HepG2 (cell line): ENCODE measurements at regions of chr15 and their contacts with region 1.

Region 1: GRCh38 chr15:52208306-52208946 is 17.2 kb upstream of the GNB5 start:
- DNase-seq: peak; percentile 76
- ATAC-seq: peak; percentile 99
- H3K4me3 ChIP-seq: no peak overlapping the region
- H3K27ac ChIP-seq: no peak overlapping the region
- H3K4me1 ChIP-seq: no peaks in the 10 kb centered on the region
- H3K27me3 ChIP-seq: no peaks in the 10 kb centered on the region
- CTCF ChIP-seq: peak; percentile 87
- EP300 ChIP-seq: no peak
- POLR2A ChIP-seq: no peak
- RAD21 ChIP-seq: peak; percentile 68

Region 2: GRCh38 chr15:52163321-52164190 is 44.9 kb before region 1 on chr15:
- CTCF ChIA-PET with region 1: interaction called, 4 read pairs
- POLR2A ChIA-PET with region 1: no interaction called
- in situ Hi-C with region 1: no loop called
- intact Hi-C with region 1: loop called (anchors 1 kb)
- DNase-seq: no peak
- ATAC-seq: peak; percentile 83
- H3K4me3 ChIP-seq: no peak overlapping the region
- H3K27ac ChIP-seq: no peak overlapping the region
- H3K4me1 ChIP-seq: no peaks in the 10 kb centered on the region
- H3K27me3 ChIP-seq: no peaks in the 10 kb centered on the region
- CTCF ChIP-seq: peak; percentile 49
- EP300 ChIP-seq: no peak
- POLR2A ChIP-seq: no peak
- RAD21 ChIP-seq: no peak

Region 3: DNA sequence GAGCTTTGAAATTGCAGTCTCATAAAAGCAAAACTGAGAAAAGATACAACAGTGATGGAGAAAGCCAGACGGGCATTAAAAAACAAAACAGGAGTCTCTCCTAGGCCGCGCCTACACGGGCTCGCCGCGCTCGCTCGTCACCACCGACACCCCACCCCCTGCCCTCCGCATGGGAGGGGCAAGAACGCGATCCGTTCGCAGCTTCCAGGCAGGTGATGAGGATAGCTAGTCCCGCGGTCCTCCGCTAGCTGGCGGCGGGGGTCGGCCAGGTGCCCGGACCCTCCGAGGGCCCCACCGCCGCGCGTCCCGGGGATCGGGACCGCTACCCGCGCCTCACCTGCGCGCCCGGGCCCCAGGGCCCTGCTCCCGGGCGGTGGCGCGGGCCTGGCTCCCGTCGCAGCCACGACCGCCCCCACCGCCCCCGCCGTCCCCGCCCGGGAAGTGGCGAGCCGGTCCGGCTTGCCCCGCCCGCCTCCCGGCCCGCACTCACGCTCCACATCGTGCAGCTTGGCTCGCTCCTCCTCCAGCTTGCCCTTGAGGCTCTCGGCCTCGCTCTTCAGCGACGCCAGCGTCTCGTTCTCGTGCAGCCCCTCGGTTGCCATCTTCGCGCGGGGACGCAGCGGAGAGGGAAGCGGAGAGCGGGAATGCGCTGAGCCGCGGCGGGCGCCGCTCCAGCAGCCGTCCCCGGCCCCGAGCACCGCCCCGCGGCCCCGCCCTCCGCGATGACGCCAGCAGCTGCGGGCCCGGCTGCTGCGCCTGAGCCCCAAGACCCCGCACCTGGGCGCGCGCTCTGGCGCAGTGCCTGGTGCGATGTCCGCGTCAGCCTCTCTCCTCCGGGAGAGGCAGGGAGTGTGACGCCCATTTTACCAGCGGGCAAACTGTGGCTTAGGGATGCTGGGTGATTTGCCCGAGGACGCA is 28.9 kb before region 1 on chr15:
- CTCF ChIA-PET with region 1: interaction called, 10 read pairs
- POLR2A ChIA-PET with region 1: no interaction called
- in situ Hi-C with region 1: no loop called
- intact Hi-C with region 1: loop called (anchors 1 kb)
- DNase-seq: peak; percentile 57
- ATAC-seq: peak; percentile 85
- H3K4me3 ChIP-seq: peak overlapping the region; percentile 66 to 80 (median 76)
- H3K27ac ChIP-seq: no peak overlapping the region
- H3K4me1 ChIP-seq: peaks cover 54% of the 10 kb centered on the region
- H3K27me3 ChIP-seq: 0 out of 5 replicates have a peak, but pooled peaks cover 0 to 4% of the 10 kb centered on the region in 2 experiments
- CTCF ChIP-seq: no peak
- EP300 ChIP-seq: no peak
- POLR2A ChIP-seq: peak; percentile 38 to 65; a peak in 3 of 4 replicates
- RAD21 ChIP-seq: no peak

Region 4: GRCh38 chr15:52193791-52194190 is 14.6 kb before region 1 on chr15:
- CTCF ChIA-PET with region 1: no interaction called
- POLR2A ChIA-PET with region 1: no interaction called
- in situ Hi-C with region 1: no loop called
- intact Hi-C with region 1: no loop called
- DNase-seq: no peak
- ATAC-seq: no peak
- H3K4me3 ChIP-seq: no peak overlapping the region
- H3K27ac ChIP-seq: no peak overlapping the region
- H3K4me1 ChIP-seq: no peaks in the 10 kb centered on the region
- H3K27me3 ChIP-seq: no peaks in the 10 kb centered on the region
- CTCF ChIP-seq: no peak
- EP300 ChIP-seq: no peak
- POLR2A ChIP-seq: no peak
- RAD21 ChIP-seq: no peak

Region 5: DNA sequence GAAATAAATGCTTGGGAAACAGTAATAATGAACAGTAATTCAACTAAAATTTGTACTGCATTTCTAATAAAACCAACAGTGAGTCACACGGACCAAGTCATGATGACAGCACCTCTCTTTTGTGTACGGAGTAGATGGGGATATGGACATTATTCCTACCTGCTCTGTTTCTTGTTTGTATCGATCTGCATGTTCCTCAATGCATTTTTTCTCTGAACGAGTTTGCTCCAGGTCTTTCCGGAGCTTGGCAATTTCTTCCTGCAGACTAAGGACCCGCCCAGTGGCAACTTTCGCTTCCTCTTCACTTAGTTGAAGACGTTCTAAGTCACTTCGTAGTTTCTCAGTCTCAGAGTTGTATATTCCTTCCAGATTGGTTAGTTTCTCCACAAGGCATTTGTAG is 161.6 kb after region 1 on chr15:
- CTCF ChIA-PET with region 1: no interaction called
- POLR2A ChIA-PET with region 1: no interaction called
- in situ Hi-C with region 1: no loop called
- intact Hi-C with region 1: no loop called
- DNase-seq: no peak
- ATAC-seq: no peak
- H3K4me3 ChIP-seq: no peak overlapping the region
- H3K27ac ChIP-seq: no peak overlapping the region
- H3K4me1 ChIP-seq: no peaks in the 10 kb centered on the region
- H3K27me3 ChIP-seq: no peaks in the 10 kb centered on the region
- CTCF ChIP-seq: no peak
- EP300 ChIP-seq: no peak
- POLR2A ChIP-seq: no peak
- RAD21 ChIP-seq: no peak